ENCODE measurements at regions of chr17 and their contacts with region 1.

Region 1: DNA sequence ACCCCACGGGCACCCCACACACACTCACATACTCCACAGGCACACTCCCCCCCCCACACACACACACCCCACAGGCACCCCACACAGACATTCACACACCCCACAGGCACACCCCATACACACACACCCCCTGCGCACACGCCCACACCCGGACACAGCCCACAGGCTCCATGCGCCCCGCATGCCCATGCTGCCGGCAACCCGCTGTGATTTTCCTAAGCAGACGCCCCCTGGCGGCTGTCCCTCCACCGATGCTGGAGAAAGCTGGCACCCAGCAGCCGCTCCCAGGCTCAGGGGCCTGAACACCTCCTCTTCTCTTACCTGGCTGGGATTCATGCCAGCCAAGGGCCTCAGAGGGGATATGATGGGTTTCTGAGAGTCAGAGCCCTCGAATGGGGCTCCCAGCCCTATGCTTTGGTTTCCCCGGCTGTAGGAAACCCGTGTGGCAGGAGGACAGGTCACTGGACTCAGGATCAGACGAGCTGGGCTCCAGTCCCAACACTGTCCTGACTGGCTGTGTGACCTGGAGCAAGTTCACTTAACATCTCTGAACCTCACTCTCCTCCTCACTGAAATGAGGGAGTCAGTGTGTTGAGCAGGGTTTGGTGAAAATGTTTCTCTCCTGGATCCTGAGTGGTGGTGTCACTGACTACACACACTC is 19.6 kb upstream of the TNFRSF13B start:
- DNase-seq: peak; percentile 70 to 86
- ATAC-seq: peak; percentile 42 to 75 (median 70)
- H3K4me3 ChIP-seq: no peak overlapping the region
- H3K27ac ChIP-seq: no peak overlapping the region
- H3K4me1 ChIP-seq: peaks cover 0 to 32% (median 6%) of the 10 kb centered on the region in 9 donors
- H3K27me3 ChIP-seq: no peaks in the 10 kb centered on the region
- CTCF ChIP-seq: peak; percentile 66 to 83 (median 79)

Region 2: GRCh38 chr17:16537130-16537458 is 454.4 kb before region 1 on chr17:
- intact Hi-C with region 1: loop called in 4 of 10 experiments (anchors 2 to 10 kb)
- DNase-seq: no peak
- ATAC-seq: no peak
- H3K4me3 ChIP-seq: peak overlapping the region in 3 of 10 donors; percentile 72 to 78 (median 72)
- H3K27ac ChIP-seq: peak overlapping the region in 4 of 10 donors; percentile 19 to 97 (median 94)
- H3K4me1 ChIP-seq: peaks cover 0 to 16% (median 2%) of the 10 kb centered on the region in 9 donors
- H3K27me3 ChIP-seq: peaks cover 0 to 5% (median 0%) of the 10 kb centered on the region in 7 donors
- CTCF ChIP-seq: no peak

Region 3: GRCh38 chr17:16915752-16916556 is 75.5 kb before region 1 on chr17:
- intact Hi-C with region 1: loop called in 2 of 10 experiments (anchors 5 kb)
- DNase-seq: peak in 1 of 2 donors; percentile 53
- ATAC-seq: peak in 4 of 8 donors; percentile 18 to 33 (median 30)
- H3K4me3 ChIP-seq: no peak overlapping the region
- H3K27ac ChIP-seq: no peak overlapping the region
- H3K4me1 ChIP-seq: peaks cover 0 to 16% (median 4%) of the 10 kb centered on the region in 9 donors
- H3K27me3 ChIP-seq: peaks cover 0 to 3% (median 0%) of the 10 kb centered on the region in 7 donors
- CTCF ChIP-seq: peak in 7 of 9 donors; percentile 25 to 57 (median 40)

Region 4: GRCh38 chr17:17303010-17303846 is 311.7 kb after region 1 on chr17 and contains the start of gene NT5M:
- intact Hi-C with region 1: loop called in 2 of 10 experiments (anchors 10 kb)
- DNase-seq: peak; percentile 57 to 78
- ATAC-seq: peak; percentile 77 to 90 (median 87)
- H3K4me3 ChIP-seq: peak within 1 kb of the TSS; percentile 35 to 63 (median 58)
- H3K27ac ChIP-seq: peak within 1 kb of the TSS in 9 of 10 donors; percentile 29 to 74 (median 66)
- H3K4me1 ChIP-seq: peaks cover 0 to 37% (median 19%) of the 10 kb centered on the region in 9 donors
- H3K27me3 ChIP-seq: no peaks in the 10 kb centered on the region
- CTCF ChIP-seq: no peak
- total RNA-seq, gene NT5M: 7.4 to 15.8 (median 9.8) TPM

Measured in heart right ventricle (tissue), 16 donors.